ENCODE measurements at regions of chr11 and their contacts with region 1.

Region 1: DNA sequence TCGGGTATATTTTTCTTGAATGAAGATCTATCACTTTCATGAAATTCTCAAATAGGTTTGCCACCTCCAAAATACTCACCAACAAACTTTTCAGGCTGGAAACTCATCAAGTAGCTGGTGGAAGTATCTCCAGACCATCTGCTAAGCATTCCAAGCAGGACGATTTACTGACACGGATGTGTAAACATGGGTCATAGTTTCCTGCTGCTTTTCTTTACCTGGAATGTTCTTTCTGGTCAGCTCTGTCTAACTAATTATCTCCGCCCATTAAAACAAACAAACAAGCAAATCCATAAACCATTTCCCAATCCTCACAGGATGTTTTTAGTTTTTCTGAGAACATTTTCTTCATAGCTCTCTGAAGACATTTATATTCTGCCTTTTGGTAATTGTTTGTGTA is 397.0 kb downstream of the METTL15 start:
- DNase-seq: no peak
- H3K4me3 ChIP-seq: no peak overlapping the region
- H3K27ac ChIP-seq: no peak overlapping the region
- H3K4me1 ChIP-seq: no peaks in the 10 kb centered on the region
- H3K27me3 ChIP-seq: no peaks in the 10 kb centered on the region
- CTCF ChIP-seq: no peak

Region 2: DNA sequence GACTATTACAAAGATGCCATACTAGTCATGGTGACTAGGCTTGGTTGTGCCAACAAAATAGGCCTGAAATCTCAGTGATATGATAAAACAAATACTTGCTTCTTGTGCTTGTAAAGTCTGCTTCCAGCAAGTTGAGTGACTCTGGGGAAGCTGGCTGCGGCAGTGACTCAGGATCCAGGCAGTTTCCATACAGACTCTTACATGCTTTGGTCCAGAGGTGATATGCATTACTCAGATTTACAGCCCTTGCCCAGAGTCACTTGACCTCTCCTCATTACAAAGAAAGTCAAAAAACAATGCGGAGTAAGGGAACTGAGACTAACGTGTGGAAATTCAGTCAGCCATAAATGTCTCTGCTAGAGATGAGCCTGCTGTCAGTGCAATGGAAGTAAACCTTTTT is 1124.1 kb after region 1 on chr11:
- CTCF ChIA-PET with region 1: no interaction called
- POLR2A ChIA-PET with region 1: interaction called, 15 read pairs
- intact Hi-C with region 1: no loop called
- DNase-seq: no peak
- H3K4me3 ChIP-seq: no peak overlapping the region
- H3K27ac ChIP-seq: no peak overlapping the region
- H3K4me1 ChIP-seq: no peaks in the 10 kb centered on the region
- H3K27me3 ChIP-seq: no peaks in the 10 kb centered on the region
- CTCF ChIP-seq: no peak

Measured in A673 (cell line).